ENCODE measurements at regions of chr4 and their contacts with region 1.

Region 1: DNA sequence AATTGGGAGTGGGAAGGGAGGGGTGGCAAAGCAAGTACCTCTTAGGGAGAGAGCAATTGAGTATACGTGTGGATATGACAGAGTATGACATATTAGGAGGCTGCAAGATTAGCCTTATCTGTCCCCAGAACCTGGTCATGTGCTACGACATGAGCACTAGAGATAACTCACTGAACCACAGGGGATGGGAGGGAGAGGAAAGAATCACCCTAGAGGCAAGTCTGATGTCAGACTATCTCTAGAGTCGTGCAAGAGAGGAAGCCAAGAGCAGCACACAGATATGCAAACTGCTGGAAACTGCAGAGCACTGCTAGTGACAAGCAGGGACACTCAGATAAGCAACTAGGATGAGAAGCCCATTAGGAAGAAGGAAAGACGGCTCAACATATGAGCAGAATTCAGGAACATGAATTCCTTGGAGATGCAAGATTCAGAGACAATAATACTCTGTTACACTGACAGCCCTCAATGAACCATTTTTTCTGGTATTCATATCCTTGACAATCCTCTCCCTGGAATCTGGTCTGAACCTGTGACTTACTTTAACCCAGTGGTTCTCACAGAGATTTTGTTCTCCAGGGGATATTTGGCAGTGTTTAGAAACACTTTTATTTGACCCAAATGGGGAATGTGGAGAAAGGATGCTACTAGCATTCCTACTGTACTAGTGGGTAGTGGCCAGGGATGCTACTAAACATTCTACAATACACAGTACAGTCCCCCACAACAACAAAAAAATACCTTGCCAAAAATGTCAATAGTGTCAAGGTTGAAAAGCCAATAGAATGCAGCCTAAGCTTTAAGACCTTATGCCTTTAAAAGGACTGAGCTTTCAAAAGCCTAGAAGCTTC is 84.0 kb upstream of the BMP2K start:
- DNase-seq: peak; percentile 91 to 98 (median 94)
- ATAC-seq: peak; percentile 94
- H3K4me3 ChIP-seq: no peak overlapping the region; the same call in 1 of the 2 replicates
- H3K27ac ChIP-seq: peak overlapping the region; percentile 73
- H3K4me1 ChIP-seq: peaks cover 32 to 74% of the 10 kb centered on the region in 2 experiments
- H3K27me3 ChIP-seq: no peaks in the 10 kb centered on the region
- CTCF ChIP-seq: no peak; a peak in 1 of 6 replicates
- EP300 ChIP-seq: peak; percentile 100
- POLR2A ChIP-seq: no peak
- RAD21 ChIP-seq: peak; percentile 46 to 59; a peak in 3 of 4 replicates

Region 2: GRCh38 chr4:78629991-78630541 is 62.1 kb before region 1 on chr4:
- CTCF ChIA-PET with region 1: no interaction called
- POLR2A ChIA-PET with region 1: no interaction called
- in situ Hi-C with region 1: no loop called
- intact Hi-C with region 1: loop called (anchors 1 kb)
- DNase-seq: peak; percentile 28 to 74 (median 35)
- ATAC-seq: peak; percentile 59
- H3K4me3 ChIP-seq: no peak overlapping the region
- H3K27ac ChIP-seq: peak overlapping the region; percentile 88
- H3K4me1 ChIP-seq: peaks cover 0 to 45% of the 10 kb centered on the region in 2 experiments; a peak in 4 of 5 replicates
- H3K27me3 ChIP-seq: no peaks in the 10 kb centered on the region
- CTCF ChIP-seq: no peak
- EP300 ChIP-seq: peak; percentile 66
- POLR2A ChIP-seq: no peak
- RAD21 ChIP-seq: peak in 1 of 2 experiments; percentile 6; a peak in 1 of 4 replicates

Region 3: GRCh38 chr4:78667764-78668163 is 24.4 kb before region 1 on chr4:
- CTCF ChIA-PET with region 1: no interaction called
- POLR2A ChIA-PET with region 1: interaction called, 4 read pairs
- in situ Hi-C with region 1: no loop called
- intact Hi-C with region 1: loop called (anchors 2 kb)
- DNase-seq: no peak
- ATAC-seq: no peak
- H3K4me3 ChIP-seq: no peak overlapping the region
- H3K27ac ChIP-seq: no peak overlapping the region
- H3K4me1 ChIP-seq: peaks cover 28 to 69% of the 10 kb centered on the region in 2 experiments
- H3K27me3 ChIP-seq: no peaks in the 10 kb centered on the region
- CTCF ChIP-seq: no peak
- EP300 ChIP-seq: no peak
- POLR2A ChIP-seq: no peak
- RAD21 ChIP-seq: no peak

Region 4: DNA sequence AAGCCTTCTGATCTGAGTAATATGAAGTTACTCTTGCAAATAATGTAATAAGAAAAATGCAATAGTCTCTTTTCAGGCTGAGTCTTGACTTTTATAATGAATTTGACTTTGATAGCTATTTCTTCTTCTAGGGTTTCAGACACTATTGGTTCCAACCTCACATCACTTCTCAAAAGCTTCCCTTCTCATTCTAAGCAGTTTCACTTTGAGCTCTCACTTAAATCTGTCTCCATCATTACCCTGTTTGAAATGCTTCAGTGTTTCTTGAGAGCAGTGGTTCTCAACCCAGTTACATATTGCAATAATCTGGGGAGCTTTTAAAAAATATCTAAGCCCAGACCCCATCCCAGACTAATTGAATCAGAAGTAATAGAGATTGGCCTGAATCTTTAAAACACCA is 43.5 kb after region 1 on chr4:
- CTCF ChIA-PET with region 1: no interaction called
- POLR2A ChIA-PET with region 1: interaction called, 3 read pairs
- in situ Hi-C with region 1: no loop called
- intact Hi-C with region 1: loop called (anchors 1 kb)
- DNase-seq: no peak
- ATAC-seq: no peak
- H3K4me3 ChIP-seq: no peak overlapping the region
- H3K27ac ChIP-seq: no peak overlapping the region
- H3K4me1 ChIP-seq: peaks cover 22 to 67% of the 10 kb centered on the region in 2 experiments
- H3K27me3 ChIP-seq: no peaks in the 10 kb centered on the region
- CTCF ChIP-seq: no peak
- EP300 ChIP-seq: no peak
- POLR2A ChIP-seq: no peak
- RAD21 ChIP-seq: no peak

Region 5: GRCh38 chr4:78768452-78769180 is 76.4 kb after region 1 on chr4:
- CTCF ChIA-PET with region 1: no interaction called
- POLR2A ChIA-PET with region 1: no interaction called
- in situ Hi-C with region 1: no loop called
- intact Hi-C with region 1: no loop called
- DNase-seq: peak in 1 of 4 experiments; percentile 54
- ATAC-seq: peak; percentile 17; the same call in 2 of the 3 replicates
- H3K4me3 ChIP-seq: no peak overlapping the region
- H3K27ac ChIP-seq: peak overlapping the region; percentile 31; the same call in 2 of the 3 replicates
- H3K4me1 ChIP-seq: peaks cover 16 to 68% of the 10 kb centered on the region in 2 experiments
- H3K27me3 ChIP-seq: no peaks in the 10 kb centered on the region
- CTCF ChIP-seq: no peak
- EP300 ChIP-seq: no peak
- POLR2A ChIP-seq: no peak
- RAD21 ChIP-seq: no peak

Region 6: GRCh38 chr4:78864405-78865024 is 172.3 kb after region 1 on chr4:
- CTCF ChIA-PET with region 1: no interaction called
- POLR2A ChIA-PET with region 1: no interaction called
- in situ Hi-C with region 1: no loop called
- intact Hi-C with region 1: loop called (anchors 1 kb)
- DNase-seq: peak; percentile 24 to 75 (median 42)
- ATAC-seq: peak; percentile 81
- H3K4me3 ChIP-seq: no peak overlapping the region
- H3K27ac ChIP-seq: no peak overlapping the region
- H3K4me1 ChIP-seq: no peaks in the 10 kb centered on the region
- H3K27me3 ChIP-seq: no peaks in the 10 kb centered on the region
- CTCF ChIP-seq: peak; percentile 48 to 79 (median 57); a peak in 5 of 6 replicates
- EP300 ChIP-seq: no peak
- POLR2A ChIP-seq: no peak
- RAD21 ChIP-seq: peak; percentile 61 to 75

Region 7: DNA sequence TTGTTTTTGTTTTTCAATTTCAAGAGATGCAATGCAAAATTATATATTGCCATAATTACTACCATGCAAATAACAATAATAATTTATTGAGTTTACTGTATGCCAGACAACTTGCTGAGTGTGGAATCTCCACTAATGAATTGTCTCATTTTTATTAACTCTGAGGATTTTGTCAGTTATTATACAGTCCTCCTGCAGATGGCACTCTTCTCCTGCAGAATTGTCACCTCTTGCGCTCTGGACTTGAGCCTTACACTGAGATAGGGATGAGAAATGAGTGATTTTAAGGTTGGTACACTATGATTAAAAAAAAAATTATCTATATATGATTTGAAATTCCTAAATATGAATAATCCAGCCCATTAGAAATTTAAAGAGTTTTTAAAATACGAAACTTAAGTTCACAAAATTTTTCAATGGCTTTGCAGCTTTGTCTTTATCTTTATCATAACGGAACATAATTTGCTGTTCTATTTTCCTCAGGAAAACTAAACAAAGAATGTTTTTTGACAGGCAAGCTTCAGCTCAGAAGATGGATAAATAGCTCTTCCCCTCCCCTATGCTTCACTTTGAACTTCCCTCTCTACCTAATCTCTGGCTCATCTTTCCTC is 259.8 kb after region 1 on chr4:
- CTCF ChIA-PET with region 1: no interaction called
- POLR2A ChIA-PET with region 1: no interaction called
- in situ Hi-C with region 1: no loop called
- intact Hi-C with region 1: no loop called
- DNase-seq: peak; percentile 56 to 70 (median 58)
- ATAC-seq: peak; percentile 86
- H3K4me3 ChIP-seq: no peak overlapping the region
- H3K27ac ChIP-seq: no peak overlapping the region
- H3K4me1 ChIP-seq: peaks cover 0 to 4% of the 10 kb centered on the region in 2 experiments; a peak in 1 of 5 replicates
- H3K27me3 ChIP-seq: no peaks in the 10 kb centered on the region
- CTCF ChIP-seq: peak; percentile 58 to 84 (median 73)
- EP300 ChIP-seq: no peak
- POLR2A ChIP-seq: no peak
- RAD21 ChIP-seq: peak; percentile 76 to 91